Breast epithelium (tissue), 4 donors: ENCODE measurements at regions of chr6 and their contacts with region 1.

Region 1: DNA sequence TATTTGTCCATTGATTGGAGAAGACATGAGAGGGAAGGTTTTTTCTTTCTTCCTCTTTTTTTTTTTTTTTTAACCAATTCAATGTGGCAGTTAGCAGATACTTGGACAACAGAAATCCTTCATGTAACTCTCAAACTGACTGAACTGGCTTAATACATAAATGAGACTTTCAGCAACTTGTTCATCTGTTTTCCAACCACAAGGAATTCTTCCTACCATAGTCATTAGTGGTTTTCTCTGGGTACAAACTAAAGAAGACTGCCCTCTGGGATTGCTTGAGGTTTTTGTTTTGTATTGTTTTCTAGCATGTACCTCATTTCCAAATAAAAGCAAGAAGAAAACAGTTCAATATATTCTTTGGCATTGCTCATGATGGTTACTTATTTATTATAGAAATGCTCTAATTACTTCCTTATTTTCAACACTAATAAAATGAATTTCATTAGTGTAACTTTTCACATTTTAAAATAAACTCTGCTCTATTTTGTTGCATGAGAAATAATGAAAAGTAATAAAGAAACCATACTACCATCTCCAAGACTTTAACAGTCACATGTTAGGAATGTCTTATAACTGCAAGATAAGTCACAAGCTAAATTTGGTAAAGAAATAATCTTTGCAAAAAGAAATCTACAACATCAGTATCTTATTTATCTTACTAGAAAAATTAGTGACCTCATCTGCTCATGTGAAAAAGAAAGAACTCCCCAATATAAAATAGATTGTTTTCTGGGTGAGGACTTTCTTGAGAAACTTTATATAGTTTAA is 52.0 kb downstream of the ME1 start:
- DNase-seq: no peak
- H3K4me3 ChIP-seq: no peak overlapping the region
- H3K27ac ChIP-seq: no peak overlapping the region
- H3K4me1 ChIP-seq: no peaks in the 10 kb centered on the region
- H3K27me3 ChIP-seq: no peaks in the 10 kb centered on the region
- CTCF ChIP-seq: no peak
- POLR2A ChIP-seq: no peak

Region 2: DNA sequence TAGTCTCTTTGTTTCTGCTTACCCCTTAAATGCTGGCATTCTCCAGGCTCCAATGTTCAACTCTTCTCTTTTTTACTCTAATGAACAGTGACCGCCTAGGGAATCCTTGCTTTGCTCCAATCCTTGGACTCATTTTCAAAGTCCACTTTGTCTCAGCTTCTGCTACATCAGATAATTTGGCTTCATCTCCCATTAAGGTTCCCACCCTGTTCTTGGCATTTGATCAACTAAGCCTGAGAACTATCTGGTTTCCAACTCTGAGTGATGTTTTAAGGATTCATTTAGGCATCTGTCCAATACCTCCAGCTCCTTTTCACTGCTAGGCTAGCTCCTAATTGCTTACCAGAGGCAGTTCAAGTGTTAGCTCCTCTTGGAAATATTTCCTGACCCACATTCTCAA is 12.9 kb before region 1 on chr6:
- intact Hi-C with region 1: loop called (anchors 1 kb)
- DNase-seq: no peak
- H3K4me3 ChIP-seq: no peak overlapping the region
- H3K27ac ChIP-seq: no peak overlapping the region
- H3K4me1 ChIP-seq: no peaks in the 10 kb centered on the region
- H3K27me3 ChIP-seq: no peaks in the 10 kb centered on the region
- CTCF ChIP-seq: no peak
- POLR2A ChIP-seq: no peak

Region 3: GRCh38 chr6:83536034-83536646 is 157.3 kb after region 1 on chr6:
- intact Hi-C with region 1: no loop called
- DNase-seq: no peak
- H3K4me3 ChIP-seq: no peak overlapping the region
- H3K27ac ChIP-seq: no peak overlapping the region
- H3K4me1 ChIP-seq: no peaks in the 10 kb centered on the region
- H3K27me3 ChIP-seq: no peaks in the 10 kb centered on the region
- CTCF ChIP-seq: peak in 1 of 3 donors; percentile 16
- POLR2A ChIP-seq: no peak